ENCODE measurements at regions of chr4 and their contacts with region 1.

Region 1: DNA sequence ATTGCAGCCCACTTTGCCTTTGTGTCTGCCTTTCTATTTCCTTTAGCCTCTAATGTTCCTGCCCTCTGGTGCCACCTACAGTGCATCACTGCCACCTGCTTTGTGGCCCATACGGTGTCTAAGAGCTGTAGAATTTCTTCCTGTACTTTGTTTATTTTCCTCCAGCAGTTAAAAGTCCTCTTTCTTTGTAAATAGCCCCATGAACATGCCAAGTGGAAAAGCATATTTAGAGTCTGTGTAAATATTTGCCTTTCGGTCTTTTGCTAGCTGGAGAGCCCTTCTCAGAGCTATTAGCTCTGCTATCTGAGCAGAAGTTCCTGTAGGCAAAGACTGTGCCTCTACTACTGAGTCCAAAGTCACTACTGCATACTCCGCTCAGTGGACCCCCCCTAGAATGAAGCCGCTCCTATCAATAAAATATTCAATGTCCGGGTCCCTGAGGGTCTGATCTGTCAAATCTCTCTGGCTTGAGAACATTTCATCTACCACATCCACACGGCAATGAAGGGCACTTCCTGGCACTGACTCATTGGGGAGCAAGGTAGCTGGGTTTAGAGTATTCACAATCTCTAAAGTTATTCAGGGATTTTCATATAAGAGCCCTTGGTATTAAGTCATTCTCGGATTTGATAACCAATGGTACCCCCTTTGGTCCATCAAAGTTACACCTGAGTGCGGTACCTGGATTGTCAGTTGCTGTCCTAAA is 36.3 kb downstream of the SULT1E1 start:
- DNase-seq: peak; percentile 85
- H3K4me3 ChIP-seq: no peak overlapping the region
- H3K27ac ChIP-seq: peak overlapping the region; percentile 72
- H3K4me1 ChIP-seq: no peaks in the 10 kb centered on the region
- H3K27me3 ChIP-seq: no peaks in the 10 kb centered on the region
- CTCF ChIP-seq: peak; percentile 50

Region 2: GRCh38 chr4:69689599-69689998 is 134.0 kb before region 1 on chr4:
- intact Hi-C with region 1: loop called (anchors 5 kb)
- DNase-seq: no peak
- H3K4me3 ChIP-seq: no peak overlapping the region
- H3K27ac ChIP-seq: no peak overlapping the region
- H3K4me1 ChIP-seq: no peaks in the 10 kb centered on the region
- H3K27me3 ChIP-seq: no peaks in the 10 kb centered on the region
- CTCF ChIP-seq: peak; percentile 53

Region 3: DNA sequence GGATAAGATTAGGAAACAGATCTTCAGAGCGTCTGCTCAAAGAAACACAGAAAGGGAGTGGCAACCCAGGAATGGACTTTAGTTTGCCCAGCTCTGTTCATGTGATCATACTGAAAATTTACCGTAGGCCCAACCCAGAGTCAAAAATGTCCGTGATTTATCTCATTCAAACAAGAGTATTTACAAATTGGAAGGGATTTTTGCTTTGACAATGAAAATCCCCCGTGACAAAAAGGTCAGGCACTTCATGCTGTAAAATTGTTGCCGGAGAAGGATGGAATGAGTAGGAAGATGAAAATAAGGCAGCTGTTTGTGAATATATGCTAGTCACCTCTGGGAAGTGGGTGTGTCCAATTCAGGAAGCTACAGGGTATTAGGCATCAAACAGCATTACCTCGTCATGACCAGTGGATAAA is 64.4 kb before region 1 on chr4:
- intact Hi-C with region 1: loop called (anchors 5 kb)
- DNase-seq: peak; percentile 51
- H3K4me3 ChIP-seq: peak overlapping the region; percentile 24
- H3K27ac ChIP-seq: peak overlapping the region; percentile 79
- H3K4me1 ChIP-seq: peaks cover 5% of the 10 kb centered on the region
- H3K27me3 ChIP-seq: no peaks in the 10 kb centered on the region
- CTCF ChIP-seq: no peak

Region 4: DNA sequence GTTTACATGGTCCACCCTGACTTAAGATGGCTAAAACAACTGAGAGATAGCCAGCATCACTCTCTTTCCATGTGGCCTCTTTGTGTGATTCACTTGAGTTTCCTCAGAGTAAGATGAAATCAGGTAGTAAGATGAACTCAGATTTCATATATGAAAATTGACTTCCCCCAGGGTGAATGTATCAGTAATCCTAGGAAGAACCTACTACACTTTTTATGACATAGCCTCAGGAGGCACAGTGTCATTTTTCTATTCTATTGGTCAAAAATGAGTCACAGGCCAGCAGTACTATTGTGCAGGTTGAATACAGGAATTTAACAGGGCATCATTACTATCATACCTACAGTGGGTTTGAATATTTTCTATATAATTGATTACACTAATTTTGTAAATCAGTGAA is 50.9 kb after region 1 on chr4:
- intact Hi-C with region 1: loop called (anchors 5 kb)
- DNase-seq: no peak
- H3K4me3 ChIP-seq: no peak overlapping the region
- H3K27ac ChIP-seq: no peak overlapping the region
- H3K4me1 ChIP-seq: no peaks in the 10 kb centered on the region
- H3K27me3 ChIP-seq: no peaks in the 10 kb centered on the region
- CTCF ChIP-seq: no peak